ENCODE measurements at regions of chr21 and their contacts with region 1.

Region 1: DNA sequence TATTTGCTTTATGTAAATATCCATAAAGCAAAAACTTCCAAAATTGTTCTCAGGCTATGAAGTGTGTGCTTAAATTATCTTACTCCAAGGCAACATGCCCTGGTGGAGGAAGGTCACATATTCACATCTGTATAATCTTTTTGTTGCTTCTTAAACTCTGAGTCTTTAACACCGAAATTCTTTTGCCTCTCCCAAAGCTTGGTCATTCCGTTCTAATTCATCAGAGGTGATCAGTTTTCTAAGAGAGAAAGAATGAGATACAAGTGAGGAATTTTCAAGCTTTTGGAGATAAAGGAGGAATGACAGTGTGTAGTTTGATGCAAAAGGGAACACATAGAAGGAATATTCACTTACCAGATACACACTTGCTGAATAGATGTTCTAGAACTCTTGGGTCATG is 561.7 kb downstream of the LTN1 start:
- DNase-seq: no peak
- ATAC-seq: no peak
- H3K4me3 ChIP-seq: no peak overlapping the region
- H3K27ac ChIP-seq: no peak overlapping the region
- H3K4me1 ChIP-seq: no peaks in the 10 kb centered on the region
- H3K27me3 ChIP-seq: no peaks in the 10 kb centered on the region
- CTCF ChIP-seq: no peak

Region 2: DNA sequence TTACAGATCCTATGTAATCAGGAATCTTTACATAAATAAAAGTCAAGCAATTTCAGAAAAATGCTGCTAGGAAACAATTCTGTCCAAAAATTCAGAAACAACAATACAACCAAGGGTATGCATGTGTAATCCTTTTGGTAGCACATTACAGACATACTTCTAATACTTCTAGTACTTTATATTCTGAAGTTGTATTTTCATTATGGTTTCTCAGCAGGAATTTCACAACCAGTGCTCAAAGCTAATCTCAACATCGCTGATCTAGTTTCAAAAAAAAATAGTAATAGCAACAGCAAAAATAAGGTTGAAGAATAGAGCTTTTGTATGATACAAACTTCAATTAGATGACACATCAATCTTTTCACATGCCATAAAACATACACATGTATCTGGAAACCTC is 16.4 kb after region 1 on chr21:
- intact Hi-C with region 1: loop called in 1 of 10 experiments (anchors 1 kb)
- DNase-seq: no peak
- ATAC-seq: no peak
- H3K4me3 ChIP-seq: no peak overlapping the region
- H3K27ac ChIP-seq: no peak overlapping the region
- H3K4me1 ChIP-seq: no peaks in the 10 kb centered on the region
- H3K27me3 ChIP-seq: no peaks in the 10 kb centered on the region
- CTCF ChIP-seq: no peak

Region 3: DNA sequence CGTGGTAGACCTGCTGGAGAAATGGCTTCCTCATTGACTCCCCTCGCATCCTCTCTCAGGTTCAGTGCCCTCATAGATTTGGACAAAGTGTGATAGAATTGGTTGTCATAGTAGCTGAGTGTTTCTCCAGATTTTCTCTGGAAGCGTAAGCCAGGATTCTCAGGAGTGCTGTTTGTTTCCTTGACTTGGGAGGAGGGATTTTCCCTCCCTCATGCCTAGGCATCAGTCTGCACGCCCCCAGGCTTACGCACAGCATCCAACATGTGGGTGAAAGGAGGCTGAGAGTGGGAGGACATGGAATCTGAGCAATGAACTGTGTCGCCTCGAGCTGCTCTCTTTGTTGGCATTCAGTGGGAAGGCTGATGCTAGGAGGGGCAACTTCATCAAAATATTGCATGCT is 58.1 kb after region 1 on chr21:
- intact Hi-C with region 1: no loop called
- DNase-seq: no peak
- ATAC-seq: peak in 1 of 8 donors; percentile 35
- H3K4me3 ChIP-seq: no peak overlapping the region
- H3K27ac ChIP-seq: no peak overlapping the region
- H3K4me1 ChIP-seq: peaks cover 0 to 8% (median 0%) of the 10 kb centered on the region in 9 donors
- H3K27me3 ChIP-seq: no peaks in the 10 kb centered on the region
- CTCF ChIP-seq: no peak

Measured in heart right ventricle (tissue), 16 donors.